ENCODE measurements at regions of chr12 and their contacts with region 1.

Region 1: GRCh38 chr12:123478762-123479161 is 20.8 kb downstream of the SNRNP35 start:
- DNase-seq: peak; percentile 94
- H3K4me3 ChIP-seq: no peak overlapping the region
- H3K27ac ChIP-seq: peak overlapping the region; percentile 83
- H3K4me1 ChIP-seq: peaks cover 20% of the 10 kb centered on the region
- H3K27me3 ChIP-seq: no peaks in the 10 kb centered on the region
- CTCF ChIP-seq: no peak
- POLR2A ChIP-seq: no peak

Region 2: GRCh38 chr12:123436017-123436964 is 42.5 kb before region 1 on chr12 and contains the start of gene RILPL2:
- CTCF ChIA-PET with region 1: no interaction called
- POLR2A ChIA-PET with region 1: no interaction called
- dilution Hi-C with region 1: no loop called
- intact Hi-C with region 1: loop called (anchors 5 kb)
- DNase-seq: peak; percentile 77
- H3K4me3 ChIP-seq: peak within 1 kb of the TSS; percentile 44 to 57 (median 46)
- H3K27ac ChIP-seq: peak within 1 kb of the TSS; percentile 1
- H3K4me1 ChIP-seq: peaks cover 13% of the 10 kb centered on the region
- H3K27me3 ChIP-seq: no peaks in the 10 kb centered on the region
- CTCF ChIP-seq: no peak
- POLR2A ChIP-seq: no peak
- total RNA-seq, gene RILPL2: 4.6 and 7.2 TPM in 2 replicates

Region 3: DNA sequence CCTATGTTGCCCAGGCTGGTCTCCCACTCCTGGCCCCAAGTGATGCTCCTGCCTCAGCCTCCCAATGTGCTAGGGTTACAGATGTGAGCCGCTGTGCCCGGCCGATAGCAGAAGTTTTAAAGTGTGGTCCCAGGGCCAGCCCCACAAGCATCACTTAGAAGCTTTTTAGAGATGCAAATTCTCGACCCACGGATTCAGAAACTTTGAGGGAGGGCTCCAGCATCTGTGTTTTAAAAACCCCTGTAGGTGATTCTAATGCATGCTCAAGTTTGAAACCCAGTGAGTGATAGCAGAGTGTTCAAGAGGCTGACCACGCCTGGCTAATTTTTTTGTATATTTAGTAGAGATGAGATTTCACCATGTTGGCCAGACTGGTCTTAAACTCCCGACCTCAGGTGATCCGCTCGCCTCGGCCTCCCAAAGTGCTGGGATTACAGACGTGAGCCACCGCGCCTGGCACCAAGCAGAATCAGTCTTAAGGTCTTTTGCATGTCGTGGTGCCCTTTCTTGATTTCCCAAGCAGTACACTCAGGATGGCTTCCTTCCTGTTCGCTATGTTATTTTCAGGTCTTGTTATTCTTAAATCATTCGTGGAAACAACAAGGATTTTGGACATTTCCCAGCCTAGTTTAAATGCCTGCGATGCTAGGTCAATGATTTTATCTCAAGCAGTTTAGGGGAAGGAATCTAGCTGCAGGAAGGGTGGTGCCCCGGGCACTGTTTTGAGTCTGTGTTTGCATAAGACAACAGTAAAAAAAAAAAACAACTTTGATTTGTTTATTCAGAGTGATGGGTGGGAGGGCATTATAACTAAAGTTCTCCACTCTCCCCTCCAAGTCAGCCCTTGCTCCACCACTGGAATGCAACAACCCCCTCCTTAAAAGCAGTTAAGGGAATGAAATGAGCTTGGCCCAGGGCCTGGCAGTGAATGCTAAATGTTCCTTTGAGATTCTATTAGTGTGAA is 33.1 kb before region 1 on chr12:
- CTCF ChIA-PET with region 1: no interaction called
- POLR2A ChIA-PET with region 1: no interaction called
- dilution Hi-C with region 1: no loop called
- intact Hi-C with region 1: loop called (anchors 1 kb)
- DNase-seq: peak; percentile 94
- H3K4me3 ChIP-seq: no peak overlapping the region
- H3K27ac ChIP-seq: peak overlapping the region; percentile 68
- H3K4me1 ChIP-seq: peaks cover 22% of the 10 kb centered on the region
- H3K27me3 ChIP-seq: no peaks in the 10 kb centered on the region
- CTCF ChIP-seq: no peak
- POLR2A ChIP-seq: peak; percentile 15

Region 4: GRCh38 chr12:123602651-123603195 is 124.0 kb after region 1 on chr12:
- CTCF ChIA-PET with region 1: no interaction called
- POLR2A ChIA-PET with region 1: no interaction called
- dilution Hi-C with region 1: no loop called
- intact Hi-C with region 1: no loop called
- DNase-seq: no peak
- H3K4me3 ChIP-seq: peak overlapping the region; percentile 72 to 89 (median 73)
- H3K27ac ChIP-seq: peak overlapping the region; percentile 2
- H3K4me1 ChIP-seq: peaks cover 7% of the 10 kb centered on the region
- H3K27me3 ChIP-seq: no peaks in the 10 kb centered on the region
- CTCF ChIP-seq: no peak
- POLR2A ChIP-seq: no peak